ENCODE measurements at regions of chr1 and their contacts with region 1.

Region 1: DNA sequence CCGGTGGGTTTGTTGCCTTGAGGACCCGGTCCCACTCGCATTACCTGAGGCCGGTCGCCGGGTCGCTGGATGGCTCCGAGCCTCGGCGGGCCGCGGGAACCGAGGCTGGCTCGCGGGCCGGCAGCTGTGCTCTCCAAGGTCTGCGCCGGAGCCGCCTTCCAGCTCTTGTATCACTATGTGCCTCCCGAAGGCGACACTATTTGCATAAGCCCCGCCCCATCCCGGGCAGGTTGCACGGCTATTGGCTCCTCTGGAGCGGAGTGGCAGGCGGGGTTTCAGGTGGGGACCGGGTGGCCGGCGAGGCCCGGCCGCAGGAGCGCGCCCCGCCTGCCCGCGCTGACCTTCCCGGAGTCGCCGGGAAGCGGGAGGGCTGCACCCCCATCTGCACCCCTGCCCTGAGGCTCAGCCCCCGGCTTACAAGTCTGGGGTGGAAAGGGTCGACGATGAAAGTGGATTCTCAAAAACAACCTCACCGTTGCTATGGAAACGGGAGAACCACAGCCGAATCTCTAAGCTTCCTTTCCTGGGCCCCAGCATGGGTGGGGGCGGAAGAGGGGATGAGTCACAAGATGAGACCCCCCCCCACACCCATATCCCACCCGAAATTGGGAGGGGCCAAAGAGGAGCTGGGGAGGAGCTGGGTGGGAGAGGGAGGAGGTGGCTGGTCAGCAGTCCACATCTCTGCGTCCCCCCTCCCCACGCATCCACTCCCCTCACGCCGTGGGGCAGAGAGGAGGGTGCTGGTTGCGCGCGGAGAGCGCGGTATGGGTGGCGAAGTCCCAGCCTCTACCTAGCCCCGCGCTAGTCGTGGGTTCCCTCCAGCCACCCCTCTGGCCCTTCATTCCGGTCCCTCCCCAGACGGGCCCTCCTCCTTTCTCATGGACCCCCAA is at the start of gene HPCAL4:
- DNase-seq: peak; percentile 95
- H3K4me3 Mint-ChIP-seq: peak within 1 kb of the TSS; percentile 63
- H3K27ac Mint-ChIP-seq: no peak within 1 kb of the TSS
- H3K4me1 Mint-ChIP-seq: no peaks in the 10 kb centered on the region
- H3K27me3 Mint-ChIP-seq: peaks cover 79% of the 10 kb centered on the region
- CTCF ChIP-seq: no peak
- total RNA-seq, gene HPCAL4: not detected in 2 replicates

Region 2: GRCh38 chr1:39301606-39302005 is 389.9 kb before region 1 on chr1:
- CTCF ChIA-PET with region 1: no interaction called
- intact Hi-C with region 1: no loop called
- DNase-seq: no peak
- H3K4me3 Mint-ChIP-seq: no peak overlapping the region
- H3K27ac Mint-ChIP-seq: no peak overlapping the region
- H3K4me1 Mint-ChIP-seq: peaks cover 11% of the 10 kb centered on the region
- H3K27me3 Mint-ChIP-seq: no peaks in the 10 kb centered on the region
- CTCF ChIP-seq: no peak

Region 3: GRCh38 chr1:39632682-39633417 is 58.7 kb before region 1 on chr1:
- CTCF ChIA-PET with region 1: no interaction called
- intact Hi-C with region 1: no loop called
- DNase-seq: peak; percentile 49
- H3K4me3 Mint-ChIP-seq: no peak overlapping the region
- H3K27ac Mint-ChIP-seq: no peak overlapping the region
- H3K4me1 Mint-ChIP-seq: peaks cover 7% of the 10 kb centered on the region
- H3K27me3 Mint-ChIP-seq: peaks cover 88% of the 10 kb centered on the region
- CTCF ChIP-seq: no peak

Region 4: GRCh38 chr1:39666772-39667171 is 24.7 kb before region 1 on chr1:
- CTCF ChIA-PET with region 1: interaction called, 4 read pairs
- intact Hi-C with region 1: loop called (anchors 2 kb)
- DNase-seq: no peak
- H3K4me3 Mint-ChIP-seq: no peak overlapping the region
- H3K27ac Mint-ChIP-seq: no peak overlapping the region
- H3K4me1 Mint-ChIP-seq: no peaks in the 10 kb centered on the region
- H3K27me3 Mint-ChIP-seq: peaks cover 87% of the 10 kb centered on the region
- CTCF ChIP-seq: no peak

Region 5: DNA sequence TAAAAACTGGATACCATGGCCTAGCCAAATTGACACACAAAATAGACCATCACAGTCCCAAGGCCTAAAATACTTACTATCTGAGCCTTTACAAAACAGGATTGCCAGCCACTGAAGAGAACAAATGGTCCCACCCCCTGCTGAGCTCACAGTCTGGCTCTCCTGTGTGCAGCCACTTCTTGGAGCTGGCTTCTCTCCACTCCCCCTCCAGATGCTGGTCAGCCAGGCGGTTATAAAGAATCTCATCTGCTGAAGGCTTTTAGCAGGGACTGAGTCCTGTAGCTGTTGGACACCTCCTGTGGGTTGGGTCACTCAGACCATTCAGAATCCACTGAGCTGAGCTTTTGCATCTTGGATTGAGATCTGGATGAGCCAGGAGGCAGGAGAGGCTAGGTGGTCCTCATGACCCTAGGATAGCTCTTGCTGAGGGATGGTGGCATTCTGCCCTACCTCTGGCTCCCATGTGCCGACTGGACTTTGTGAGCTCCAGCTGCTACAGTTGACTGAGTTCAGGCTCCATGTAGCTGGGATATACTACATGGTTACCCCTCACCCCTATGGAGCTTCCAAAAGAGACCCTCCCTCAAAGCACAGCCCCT is 63.5 kb after region 1 on chr1:
- CTCF ChIA-PET with region 1: no interaction called
- intact Hi-C with region 1: no loop called
- DNase-seq: no peak
- H3K4me3 Mint-ChIP-seq: no peak overlapping the region
- H3K27ac Mint-ChIP-seq: no peak overlapping the region
- H3K4me1 Mint-ChIP-seq: no peaks in the 10 kb centered on the region
- H3K27me3 Mint-ChIP-seq: no peaks in the 10 kb centered on the region
- CTCF ChIP-seq: no peak

Measured in Calu3 (cell line).